ENCODE measurements at regions of chr3 and their contacts with region 1.

Region 1: DNA sequence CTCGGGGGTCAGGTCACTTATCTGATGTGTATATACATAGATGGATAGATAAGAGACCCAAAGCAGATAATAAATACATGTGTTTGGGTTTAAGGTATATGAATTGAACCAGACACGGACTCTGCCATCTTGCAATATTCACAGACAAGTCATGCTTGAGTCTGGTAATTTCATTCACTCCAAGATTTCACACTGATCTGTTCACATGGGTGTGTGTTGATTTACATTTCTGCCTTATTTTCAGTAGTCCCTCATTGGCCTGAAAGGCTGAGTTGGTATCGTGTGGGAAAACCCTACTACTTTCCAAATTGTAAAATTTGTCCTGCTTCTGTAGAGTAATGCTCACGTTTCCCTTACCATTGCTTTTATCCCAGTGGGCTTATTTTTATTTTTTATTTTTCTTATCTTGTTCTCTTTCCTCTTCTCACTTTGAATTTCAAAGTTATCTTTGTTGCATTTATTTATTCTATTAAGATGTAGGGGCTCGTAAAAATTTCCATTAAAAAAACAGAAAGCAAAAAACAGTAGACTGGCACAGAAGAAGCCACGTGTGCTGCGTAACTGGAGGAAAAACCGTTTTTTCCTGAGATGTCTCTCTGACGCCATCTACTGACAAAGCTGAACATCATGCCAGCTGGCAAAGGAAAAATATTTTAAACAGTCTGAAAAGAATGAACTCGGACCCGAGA is 10.8 kb upstream of the MFSD1 start:
- DNase-seq: no peak
- H3K4me3 ChIP-seq: peak overlapping the region in 2 of 4 donors; percentile 20 to 40
- H3K27ac ChIP-seq: no peak overlapping the region
- H3K4me1 ChIP-seq: peaks cover 0 to 14% (median 7%) of the 10 kb centered on the region in 3 donors
- H3K27me3 ChIP-seq: no peaks in the 10 kb centered on the region
- CTCF ChIP-seq: peak; percentile 57 to 82 (median 69)
- POLR2A ChIP-seq: no peak

Region 2: DNA sequence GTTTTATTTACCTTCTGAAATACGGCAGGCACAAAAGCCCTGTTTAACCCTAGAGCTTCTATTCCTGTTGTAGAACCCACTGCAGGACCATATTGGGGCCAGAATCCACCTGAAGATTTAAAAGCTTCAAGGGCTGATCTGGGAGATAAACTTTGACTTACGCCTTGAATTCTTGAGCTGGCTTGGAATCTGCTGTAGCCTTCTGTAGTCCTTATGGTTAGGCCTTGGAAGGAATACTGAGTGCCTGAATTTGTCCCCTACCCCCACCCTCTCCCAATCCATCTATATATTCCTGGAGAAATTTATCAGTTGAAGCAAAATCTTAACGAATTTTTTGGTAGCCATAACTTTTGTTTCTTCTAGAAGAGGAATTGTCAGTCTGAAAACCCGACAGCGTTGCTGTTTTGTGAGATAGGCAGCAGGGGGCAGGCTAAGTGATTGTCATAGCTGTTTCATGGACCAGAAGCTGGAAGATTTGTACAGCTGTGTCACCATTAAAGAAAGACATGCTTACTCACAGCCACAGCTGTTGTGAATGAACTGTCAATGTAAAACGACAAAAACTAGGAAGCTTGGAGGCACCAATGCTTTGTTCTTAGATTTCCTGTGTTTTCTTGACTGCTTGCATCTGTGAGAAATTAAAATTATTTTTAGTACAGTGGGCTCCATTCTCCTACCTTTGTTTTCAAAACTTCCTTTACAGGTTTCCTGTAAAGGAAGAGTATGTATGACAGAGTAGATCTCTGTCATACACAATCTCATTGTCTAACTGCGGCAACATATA is 131.4 kb before region 1 on chr3:
- intact Hi-C with region 1: loop called (anchors 10 kb)
- DNase-seq: no peak
- H3K4me3 ChIP-seq: no peak overlapping the region
- H3K27ac ChIP-seq: peak overlapping the region in 2 of 4 donors; percentile 22 to 39
- H3K4me1 ChIP-seq: peaks cover 0 to 4% (median 0%) of the 10 kb centered on the region in 3 donors
- H3K27me3 ChIP-seq: no peaks in the 10 kb centered on the region
- CTCF ChIP-seq: peak in 5 of 6 experiments; percentile 55 to 66 (median 61)
- POLR2A ChIP-seq: no peak

Region 3: GRCh38 chr3:158727206-158728060 is 63.6 kb before region 1 on chr3:
- intact Hi-C with region 1: loop called (anchors 5 kb)
- DNase-seq: no peak
- H3K4me3 ChIP-seq: peak overlapping the region in 1 of 4 donors; percentile 24
- H3K27ac ChIP-seq: peak overlapping the region in 3 of 4 donors; percentile 22 to 82 (median 78)
- H3K4me1 ChIP-seq: peaks cover 29 to 70% (median 31%) of the 10 kb centered on the region in 3 donors
- H3K27me3 ChIP-seq: no peaks in the 10 kb centered on the region
- CTCF ChIP-seq: peak; percentile 80 to 91 (median 86)
- POLR2A ChIP-seq: no peak

Measured in esophagus squamous epithelium (tissue), 5 donors.